Mammary epithelial cell (primary cell): ENCODE measurements at regions of chr9 and their contacts with region 1.

Region 1: DNA sequence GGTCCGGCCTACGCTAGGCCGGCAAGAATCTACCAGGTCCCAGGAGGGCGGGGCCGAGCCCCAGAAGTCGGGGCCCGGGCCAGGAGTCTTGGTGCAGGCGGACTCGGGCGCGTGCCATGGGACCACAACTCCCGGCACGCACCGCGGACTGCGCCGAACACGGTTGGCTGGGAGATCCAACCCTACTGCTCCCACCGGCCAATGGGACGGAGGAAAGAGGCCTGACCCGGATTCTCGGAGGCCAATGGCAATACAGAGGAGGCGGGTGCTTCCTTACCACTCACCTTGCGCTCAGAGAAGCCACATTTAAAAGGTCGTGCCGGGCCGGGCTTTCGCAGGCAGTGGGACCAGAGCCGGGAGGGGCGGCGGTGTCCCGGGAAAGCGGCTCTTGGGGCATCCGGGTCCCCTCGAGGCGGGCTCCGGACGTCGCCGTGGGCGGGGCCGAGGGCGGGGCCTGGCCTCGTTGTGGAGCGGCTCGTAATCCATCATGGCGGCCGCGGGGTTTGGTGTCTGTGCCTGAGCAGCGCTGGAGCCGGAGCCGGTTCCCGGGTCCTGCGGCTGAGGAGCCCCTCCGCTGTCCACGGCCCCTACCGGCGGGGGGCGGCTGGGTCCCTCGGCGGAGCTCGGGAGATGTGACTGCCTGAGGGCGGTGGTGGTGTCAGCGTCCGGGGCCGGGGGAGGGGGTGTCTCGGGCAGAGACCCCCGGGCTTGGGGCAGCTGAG is 19.1 kb downstream of the EXOSC2 start:
- DNase-seq: peak; percentile 99
- H3K4me3 ChIP-seq: peak overlapping the region; percentile 85 to 96 (median 93)
- H3K27ac ChIP-seq: peak overlapping the region; percentile 85
- H3K4me1 ChIP-seq: peaks cover 23% of the 10 kb centered on the region
- H3K27me3 ChIP-seq: no peaks in the 10 kb centered on the region
- CTCF ChIP-seq: no peak

Region 2: DNA sequence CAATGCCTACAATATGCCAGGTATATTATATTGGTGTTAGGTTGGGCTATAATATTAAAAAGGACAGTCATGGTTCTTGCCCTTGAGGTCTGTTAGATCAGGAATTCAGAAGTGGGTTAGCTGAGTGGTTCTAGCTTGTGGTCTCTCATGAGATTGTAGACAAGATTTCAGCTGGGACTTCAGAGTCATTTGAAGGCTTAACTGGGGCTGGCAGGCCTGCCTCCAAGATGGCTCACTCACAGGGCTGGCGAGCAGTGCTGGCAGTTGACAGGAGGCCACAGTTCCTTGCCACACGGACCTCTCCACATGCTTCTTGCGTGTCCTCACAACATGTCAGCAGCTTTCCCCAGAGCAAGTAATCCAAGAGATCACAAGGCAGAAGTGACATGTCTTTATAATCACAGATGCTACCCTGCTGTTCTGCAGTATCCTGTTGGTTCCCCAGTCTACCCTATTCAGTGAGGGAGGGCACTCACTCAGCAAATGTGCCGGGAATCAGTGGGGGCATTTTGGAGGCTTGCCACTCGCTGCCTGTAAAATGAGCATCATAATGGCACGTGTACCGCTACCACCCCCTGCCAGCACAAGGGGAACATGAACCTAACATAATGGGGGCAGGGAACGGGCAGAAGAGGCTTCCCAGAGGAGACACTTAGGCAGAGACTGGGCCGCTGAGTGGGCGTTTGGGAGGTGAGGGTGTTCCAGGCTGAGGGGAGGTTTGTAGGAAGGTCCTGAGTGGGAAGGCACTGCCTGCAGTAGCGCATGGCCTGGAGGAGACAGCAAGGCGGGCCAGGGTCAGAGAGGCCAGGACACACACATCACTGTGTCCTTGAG is 50.9 kb after region 1 on chr9:
- CTCF ChIA-PET with region 1: no interaction called
- dilution Hi-C with region 1: no loop called
- in situ Hi-C with region 1: loop called in 1 of 2 experiments (anchors 5 kb)
- intact Hi-C with region 1: no loop called
- DNase-seq: no peak
- H3K4me3 ChIP-seq: no peak overlapping the region
- H3K27ac ChIP-seq: no peak overlapping the region
- H3K4me1 ChIP-seq: peaks cover 19% of the 10 kb centered on the region
- H3K27me3 ChIP-seq: no peaks in the 10 kb centered on the region
- CTCF ChIP-seq: no peak

Region 3: GRCh38 chr9:130770679-130771442 is 58.1 kb after region 1 on chr9:
- CTCF ChIA-PET with region 1: no interaction called
- dilution Hi-C with region 1: no loop called
- in situ Hi-C with region 1: no loop called
- intact Hi-C with region 1: loop called (anchors 2 kb)
- DNase-seq: peak; percentile 47
- H3K4me3 ChIP-seq: no peak overlapping the region
- H3K27ac ChIP-seq: no peak overlapping the region
- H3K4me1 ChIP-seq: peaks cover 10% of the 10 kb centered on the region
- H3K27me3 ChIP-seq: no peaks in the 10 kb centered on the region
- CTCF ChIP-seq: peak; percentile 45 to 60

Region 4: GRCh38 chr9:130847327-130848217 is 134.8 kb after region 1 on chr9:
- CTCF ChIA-PET with region 1: no interaction called
- dilution Hi-C with region 1: no loop called
- in situ Hi-C with region 1: loop called in 1 of 2 experiments (anchors 5 kb)
- intact Hi-C with region 1: loop called (anchors 5 kb)
- DNase-seq: peak; percentile 98
- H3K4me3 ChIP-seq: peak overlapping the region in 1 of 3 experiments; percentile 5
- H3K27ac ChIP-seq: peak overlapping the region; percentile 76
- H3K4me1 ChIP-seq: peaks cover 35% of the 10 kb centered on the region
- H3K27me3 ChIP-seq: no peaks in the 10 kb centered on the region
- CTCF ChIP-seq: peak; percentile 22 to 41

Region 5: DNA sequence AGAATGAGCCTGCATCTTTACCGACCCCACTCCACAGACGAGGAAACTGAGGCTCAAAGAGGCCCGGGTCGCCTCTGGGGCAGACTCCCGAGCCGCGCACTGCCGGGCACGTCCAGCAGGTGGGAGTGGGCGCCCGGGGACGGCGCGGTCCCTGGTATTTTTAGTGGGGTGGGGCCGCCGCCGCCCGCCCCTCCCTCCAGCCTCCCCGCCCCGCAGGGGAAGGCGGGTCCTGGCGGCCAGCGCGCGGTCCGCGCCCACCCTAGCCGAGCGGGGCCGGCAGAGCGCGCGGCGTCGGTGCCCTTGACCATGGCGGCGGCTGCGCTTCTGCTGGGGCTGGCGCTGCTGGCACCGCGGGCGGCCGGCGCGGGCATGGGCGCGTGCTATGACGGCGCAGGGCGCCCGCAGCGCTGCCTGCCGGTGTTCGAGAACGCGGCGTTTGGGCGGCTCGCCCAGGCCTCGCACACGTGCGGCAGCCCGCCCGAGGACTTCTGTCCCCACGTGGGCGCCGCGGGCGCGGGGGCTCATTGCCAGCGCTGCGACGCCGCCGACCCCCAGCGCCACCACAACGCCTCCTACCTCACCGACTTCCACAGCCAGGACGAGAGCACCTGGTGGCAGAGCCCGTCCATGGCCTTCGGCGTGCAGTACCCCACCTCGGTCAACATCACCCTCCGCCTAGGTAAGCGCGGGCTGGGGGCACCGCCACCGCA is 296.3 kb after region 1 on chr9 and contains the start of gene LAMC3:
- CTCF ChIA-PET with region 1: no interaction called
- dilution Hi-C with region 1: no loop called
- in situ Hi-C with region 1: loop called in 1 of 2 experiments (anchors 25 kb)
- intact Hi-C with region 1: no loop called
- DNase-seq: no peak
- H3K4me3 ChIP-seq: peak within 1 kb of the TSS in 2 of 3 experiments; percentile 21 to 27
- H3K27ac ChIP-seq: no peak within 1 kb of the TSS
- H3K4me1 ChIP-seq: no peaks in the 10 kb centered on the region
- H3K27me3 ChIP-seq: peaks cover 6% of the 10 kb centered on the region
- CTCF ChIP-seq: peak in 1 of 2 donors; percentile 32
- total RNA-seq, gene LAMC3: not detected

Region 6: DNA sequence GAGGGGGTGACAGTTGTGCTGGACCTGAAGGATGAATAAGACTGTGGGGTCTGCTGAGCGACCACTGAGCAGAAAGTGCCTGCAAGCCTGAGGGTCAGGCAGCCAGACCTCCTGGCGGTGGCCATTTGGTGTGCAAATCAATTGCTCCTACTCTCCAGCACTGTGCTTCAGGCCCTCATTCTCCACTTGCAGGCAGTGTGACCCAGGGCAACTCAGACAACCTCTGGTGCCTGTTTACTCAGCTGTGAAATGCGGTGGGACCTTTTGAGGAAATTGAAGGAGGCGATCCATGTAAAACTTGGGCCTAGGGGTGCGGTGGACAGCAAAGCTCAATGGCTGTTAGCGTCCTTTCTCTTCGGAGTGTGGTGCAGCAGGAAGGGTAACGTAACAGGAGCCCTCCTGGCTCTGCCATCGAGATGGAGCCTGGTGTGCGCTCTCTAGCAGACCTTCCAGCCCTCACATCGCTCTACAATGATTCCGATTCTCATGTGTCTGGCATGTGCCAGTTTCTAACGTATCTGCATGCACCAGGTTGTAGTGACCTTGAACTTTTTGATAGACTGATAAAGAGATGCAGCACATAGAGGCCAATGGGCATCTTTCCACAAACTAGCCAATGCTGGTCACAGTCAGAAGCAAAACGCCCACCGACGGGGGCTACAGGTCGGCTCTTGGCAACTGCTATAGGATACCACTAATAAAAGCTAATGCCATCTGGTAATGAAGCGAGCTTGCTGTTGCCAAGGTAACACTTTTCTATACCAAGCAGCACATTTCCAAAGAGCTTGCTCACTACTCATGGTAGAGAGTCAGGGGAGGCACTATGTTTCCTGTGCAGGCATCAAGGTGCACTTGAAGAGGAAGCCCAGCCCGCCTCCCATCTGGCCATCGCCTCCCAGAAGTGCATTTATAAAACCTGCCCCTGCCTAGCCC is 1186.8 kb after region 1 on chr9:
- CTCF ChIA-PET with region 1: no interaction called
- dilution Hi-C with region 1: no loop called
- in situ Hi-C with region 1: no loop called
- intact Hi-C with region 1: no loop called
- DNase-seq: no peak
- H3K4me3 ChIP-seq: no peak overlapping the region
- H3K27ac ChIP-seq: no peak overlapping the region
- H3K4me1 ChIP-seq: no peaks in the 10 kb centered on the region
- H3K27me3 ChIP-seq: no peaks in the 10 kb centered on the region
- CTCF ChIP-seq: no peak